ENCODE measurements at regions of chr3 and their contacts with region 1.

Region 1: DNA sequence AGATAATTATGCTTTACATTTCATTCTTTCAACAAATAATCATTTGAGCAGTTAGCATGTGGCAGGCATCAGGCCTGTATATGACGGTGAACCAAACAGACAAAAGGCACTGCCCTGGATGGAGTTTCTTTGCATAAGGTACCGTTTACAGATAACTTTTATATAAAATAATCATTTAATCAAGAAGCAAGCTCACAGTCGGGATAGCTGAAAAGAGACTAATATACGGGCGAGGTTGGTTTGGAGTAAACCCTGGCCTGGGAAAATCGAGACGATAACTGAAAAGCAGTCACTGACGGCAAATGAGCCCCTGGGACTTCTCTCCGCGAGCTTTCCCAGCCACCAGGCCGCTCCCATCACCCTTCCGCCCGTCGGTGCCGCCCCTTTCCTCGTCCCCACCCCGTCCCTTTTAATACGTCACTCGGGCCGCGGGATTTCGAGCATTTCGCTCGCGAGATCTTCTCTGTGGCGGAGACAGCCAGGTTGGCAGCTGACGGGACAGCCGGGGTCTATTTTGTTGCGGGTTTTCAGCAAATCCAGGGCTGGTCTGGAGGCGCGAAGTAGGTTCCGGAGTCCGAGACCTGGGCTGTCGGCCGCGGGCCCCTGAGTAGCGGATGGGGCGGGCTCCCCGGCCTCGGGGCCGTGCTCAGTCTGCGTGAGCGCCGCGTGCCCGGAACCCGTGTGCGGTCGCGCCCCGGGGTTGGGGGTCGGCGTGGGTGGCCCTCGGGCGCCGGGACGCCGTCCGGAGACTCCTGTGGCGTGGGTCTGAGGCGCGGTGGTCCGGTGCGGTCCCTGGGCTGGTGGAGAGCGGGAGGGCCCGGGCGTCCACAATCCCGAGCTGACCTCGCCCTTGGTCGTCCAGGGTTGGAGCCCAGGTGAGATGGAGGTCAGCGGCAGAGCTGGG is at the start of gene NMD3:
- DNase-seq: peak; percentile 84 to 95
- H3K4me3 ChIP-seq: peak within 1 kb of the TSS; percentile 87
- H3K27ac ChIP-seq: peak within 1 kb of the TSS; percentile 65
- H3K4me1 ChIP-seq: peaks cover 27% of the 10 kb centered on the region
- H3K27me3 ChIP-seq: no peaks in the 10 kb centered on the region
- CTCF ChIP-seq: no peak
- total RNA-seq, gene NMD3: 56.5 and 64.2 TPM in 2 replicates

Region 2: GRCh38 chr3:160319322-160319721 is 901.8 kb before region 1 on chr3:
- CTCF ChIA-PET with region 1: no interaction called
- POLR2A ChIA-PET with region 1: no interaction called
- intact Hi-C with region 1: no loop called
- DNase-seq: no peak
- H3K4me3 ChIP-seq: no peak overlapping the region
- H3K27ac ChIP-seq: no peak overlapping the region
- H3K4me1 ChIP-seq: no peaks in the 10 kb centered on the region
- H3K27me3 ChIP-seq: no peaks in the 10 kb centered on the region
- CTCF ChIP-seq: no peak

Region 3: DNA sequence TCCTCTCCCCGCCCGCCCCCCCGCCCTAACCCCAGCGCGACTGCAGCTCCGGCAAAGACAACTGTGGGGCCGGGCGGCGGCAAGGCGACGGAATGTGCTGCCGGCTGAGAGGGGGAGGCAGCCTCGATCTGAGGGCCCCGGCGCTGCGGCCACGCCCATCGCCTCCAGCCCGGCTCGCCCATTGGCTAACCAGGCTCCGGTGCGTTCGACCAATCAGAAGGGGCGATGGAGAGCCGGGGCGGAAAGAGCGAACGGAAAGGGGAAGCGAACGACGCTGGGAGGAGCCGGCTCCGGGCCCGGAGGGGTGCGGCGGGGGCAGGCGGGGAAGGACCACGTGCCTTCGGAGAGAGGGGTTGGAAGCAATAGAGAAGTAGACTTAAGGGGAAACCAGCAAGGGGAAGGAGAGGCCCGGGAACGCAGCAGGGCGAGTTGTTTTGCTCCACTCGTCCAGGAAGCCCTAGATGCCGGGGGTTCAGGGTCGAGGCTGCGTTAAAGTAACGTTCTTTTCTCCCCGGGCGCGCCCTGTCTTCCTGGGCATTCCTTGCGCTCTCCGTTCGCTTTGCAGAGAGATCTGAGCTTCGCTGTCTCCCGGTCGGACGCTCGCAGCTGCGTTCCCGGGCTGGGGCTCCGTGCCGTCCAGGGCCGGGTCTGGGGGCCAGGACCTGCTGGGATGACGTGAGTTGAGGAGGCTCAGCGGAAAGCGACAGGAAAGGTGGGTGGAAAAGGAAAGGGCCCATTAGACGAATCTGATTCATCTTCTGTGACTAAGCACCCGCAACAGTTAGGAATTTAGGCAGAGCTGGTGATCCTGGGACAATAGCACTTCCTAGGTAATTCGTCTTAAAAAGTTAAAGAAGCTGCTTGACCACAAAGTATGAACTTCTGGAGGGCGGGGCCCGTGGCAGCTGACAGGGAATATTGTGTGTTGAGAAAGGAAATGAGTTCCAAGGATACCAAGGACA is 655.4 kb before region 1 on chr3 and contains the start of gene KPNA4:
- CTCF ChIA-PET with region 1: no interaction called
- POLR2A ChIA-PET with region 1: no interaction called
- intact Hi-C with region 1: loop called (anchors 10 kb)
- DNase-seq: peak; percentile 94 to 99
- H3K4me3 ChIP-seq: peak within 1 kb of the TSS; percentile 86
- H3K27ac ChIP-seq: peak within 1 kb of the TSS; percentile 98
- H3K4me1 ChIP-seq: peaks cover 40% of the 10 kb centered on the region
- H3K27me3 ChIP-seq: no peaks in the 10 kb centered on the region
- CTCF ChIP-seq: no peak
- total RNA-seq, gene KPNA4: 49.2 and 61.0 TPM in 2 replicates

Region 4: DNA sequence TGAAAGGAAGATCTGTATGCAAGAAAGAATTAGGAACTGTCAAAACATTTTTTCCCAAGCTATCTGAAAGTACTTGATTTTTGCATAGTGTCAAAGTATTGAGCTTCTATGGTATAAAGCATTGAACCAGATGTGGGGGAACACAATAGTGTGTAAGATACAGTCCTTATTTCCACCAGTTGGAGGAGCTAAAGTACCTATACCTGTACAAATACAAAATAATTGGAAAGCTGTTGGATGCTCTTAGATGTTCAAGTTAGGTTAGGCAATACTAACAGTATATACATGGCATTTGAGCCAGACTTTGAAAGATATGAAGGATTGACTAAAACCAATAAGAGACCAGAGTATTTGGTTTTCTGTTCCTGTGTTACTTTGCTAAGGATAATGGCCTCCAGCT is 264.3 kb before region 1 on chr3:
- CTCF ChIA-PET with region 1: interaction called, 3 read pairs
- POLR2A ChIA-PET with region 1: interaction called, 3 read pairs
- intact Hi-C with region 1: loop called (anchors 10 kb)
- DNase-seq: no peak
- H3K4me3 ChIP-seq: no peak overlapping the region
- H3K27ac ChIP-seq: no peak overlapping the region
- H3K4me1 ChIP-seq: no peaks in the 10 kb centered on the region
- H3K27me3 ChIP-seq: no peaks in the 10 kb centered on the region
- CTCF ChIP-seq: peak; percentile 67

Region 5: GRCh38 chr3:161035711-161036110 is 185.4 kb before region 1 on chr3:
- CTCF ChIA-PET with region 1: no interaction called
- POLR2A ChIA-PET with region 1: no interaction called
- intact Hi-C with region 1: no loop called
- DNase-seq: no peak
- H3K4me3 ChIP-seq: no peak overlapping the region
- H3K27ac ChIP-seq: no peak overlapping the region
- H3K4me1 ChIP-seq: peaks cover 11% of the 10 kb centered on the region
- H3K27me3 ChIP-seq: no peaks in the 10 kb centered on the region
- CTCF ChIP-seq: no peak

Region 6: DNA sequence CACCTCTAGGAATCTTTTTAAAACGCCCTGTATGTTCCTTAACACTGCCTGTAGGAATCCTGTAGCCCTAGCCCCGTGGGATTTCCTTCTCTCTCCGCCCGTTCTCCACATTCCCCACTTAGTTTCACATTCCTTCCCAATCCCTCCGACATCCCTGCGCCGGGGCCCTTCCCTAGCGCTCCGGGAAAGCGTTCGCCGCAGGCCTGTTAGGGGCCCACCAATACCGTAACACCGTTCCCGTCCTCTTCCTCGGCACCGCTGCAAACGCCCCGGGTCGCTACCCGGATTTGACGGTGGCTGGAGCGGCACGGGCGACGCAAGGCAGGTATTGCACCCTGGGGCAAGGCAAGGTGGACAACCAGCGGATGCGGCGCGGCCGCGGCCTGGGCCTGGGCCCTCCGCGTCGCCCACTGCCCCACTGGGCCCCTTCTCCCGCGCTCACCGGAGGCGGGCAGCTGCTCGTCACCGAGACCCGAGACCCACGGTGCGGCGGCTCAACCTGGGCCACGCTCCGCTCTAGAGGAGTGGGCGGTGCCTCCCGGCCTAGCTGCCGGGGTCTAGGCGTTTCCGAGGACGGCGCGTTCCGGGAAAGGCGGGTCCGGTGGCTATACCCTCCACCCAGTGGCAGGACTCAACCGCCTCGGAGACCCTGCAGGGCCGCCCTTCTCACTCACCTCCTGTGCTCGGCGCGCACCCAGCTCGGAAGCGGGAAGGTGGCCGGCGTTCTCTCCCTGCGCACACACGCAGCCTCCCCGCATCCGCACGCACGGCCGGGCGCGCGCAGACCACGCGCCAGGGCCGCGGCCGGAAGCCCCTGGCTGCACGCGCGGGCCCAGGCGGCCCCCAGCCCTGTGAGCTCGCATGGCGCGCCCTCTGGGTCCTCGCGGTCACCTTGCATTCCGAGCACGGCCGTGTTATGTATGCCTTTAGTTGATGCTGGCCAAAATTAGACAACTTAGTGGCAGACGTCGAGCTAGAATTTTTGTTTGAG is 116.2 kb before region 1 on chr3 and contains the start of gene B3GALNT1:
- CTCF ChIA-PET with region 1: no interaction called
- POLR2A ChIA-PET with region 1: no interaction called
- intact Hi-C with region 1: loop called (anchors 1 kb)
- DNase-seq: peak; percentile 47 to 75
- H3K4me3 ChIP-seq: peak within 1 kb of the TSS; percentile 85
- H3K27ac ChIP-seq: no peak within 1 kb of the TSS
- H3K4me1 ChIP-seq: peaks cover 23% of the 10 kb centered on the region
- H3K27me3 ChIP-seq: no peaks in the 10 kb centered on the region
- CTCF ChIP-seq: 0 out of 2 replicates have a peak, but pooled peaks have one; percentile 24
- total RNA-seq, gene B3GALNT1: 8.8 and 17.3 TPM in 2 replicates

Region 7: GRCh38 chr3:161139686-161140085 is 81.4 kb before region 1 on chr3:
- CTCF ChIA-PET with region 1: no interaction called
- POLR2A ChIA-PET with region 1: no interaction called
- intact Hi-C with region 1: no loop called
- DNase-seq: no peak
- H3K4me3 ChIP-seq: no peak overlapping the region
- H3K27ac ChIP-seq: no peak overlapping the region
- H3K4me1 ChIP-seq: peaks cover 21% of the 10 kb centered on the region; the same call in 1 of the 2 replicates
- H3K27me3 ChIP-seq: no peaks in the 10 kb centered on the region
- CTCF ChIP-seq: no peak

Measured in PC-9 (cell line).